ENCODE measurements at regions of chr10 and their contacts with region 1.

Region 1: GRCh38 chr10:37456456-37456855 is 331.1 kb downstream of the ANKRD30A start:
- DNase-seq: no peak

Region 2: GRCh38 chr10:37467246-37467645 is 10.8 kb after region 1 on chr10:
- intact Hi-C with region 1: loop called (anchors 2 kb)
- DNase-seq: no peak

Region 3: GRCh38 chr10:37520488-37520887 is 64.0 kb after region 1 on chr10:
- intact Hi-C with region 1: no loop called
- DNase-seq: no peak